Tibial artery (tissue), 4 donors: ENCODE measurements at regions of chr6 and their contacts with region 1.

Region 1: DNA sequence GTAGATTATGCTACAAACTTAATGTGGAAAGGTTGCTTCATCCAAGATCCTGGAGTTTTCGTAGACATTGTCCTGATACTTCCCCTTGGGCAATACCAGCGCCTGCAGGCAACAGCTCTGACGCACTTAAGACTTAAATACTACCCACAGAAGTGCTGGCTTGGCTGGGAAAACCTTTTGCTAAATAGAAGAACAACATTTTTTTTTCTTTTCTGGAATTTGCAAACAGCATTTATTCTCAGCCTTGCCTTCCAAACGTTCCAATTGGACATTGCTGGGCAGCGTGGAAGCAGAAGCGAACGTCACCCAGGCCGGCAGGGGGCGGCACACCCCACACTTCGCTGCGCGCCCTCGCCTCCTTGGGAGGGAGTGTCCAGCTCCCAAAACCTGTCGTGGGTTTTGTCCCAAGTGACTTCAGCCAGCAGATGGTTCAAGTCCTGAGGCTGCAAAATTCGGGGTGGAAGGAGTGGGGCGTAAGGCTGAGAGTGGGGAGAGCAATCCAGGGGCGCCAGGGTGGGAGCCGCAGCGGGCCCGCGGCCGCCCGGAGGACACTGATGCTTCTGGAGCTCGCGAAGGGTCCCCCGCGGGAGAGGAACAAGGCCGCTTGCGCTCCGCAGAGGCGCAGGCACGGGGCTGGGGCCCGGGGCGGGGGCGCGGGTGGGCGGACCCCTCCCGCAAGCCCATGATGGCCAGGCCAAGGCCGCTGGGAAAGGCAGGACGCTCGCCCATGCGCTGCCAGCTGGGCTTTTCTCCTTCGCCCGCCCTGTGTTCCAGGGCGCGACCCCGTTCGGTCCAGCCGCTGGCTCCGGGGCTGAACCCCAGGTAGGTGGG is 60.8 kb upstream of the MAP3K4 start:
- DNase-seq: peak; percentile 60 to 87
- H3K4me3 ChIP-seq: peak overlapping the region; percentile 51 to 58
- H3K27ac ChIP-seq: peak overlapping the region; percentile 34 to 62
- H3K4me1 ChIP-seq: peaks cover 0 to 17% (median 10%) of the 10 kb centered on the region in 4 donors
- H3K27me3 ChIP-seq: peaks cover 0 to 2% of the 10 kb centered on the region in 2 donors
- CTCF ChIP-seq: peak; percentile 92

Region 2: GRCh38 chr6:160991406-160992060 is 60.8 kb after region 1 on chr6 and contains the start of gene MAP3K4:
- intact Hi-C with region 1: loop called (anchors 2 kb)
- DNase-seq: peak; percentile 59 to 88
- H3K4me3 ChIP-seq: peak within 1 kb of the TSS; percentile 99 to 100
- H3K27ac ChIP-seq: peak within 1 kb of the TSS; percentile 91 to 94
- H3K4me1 ChIP-seq: peaks cover 0 to 26% (median 11%) of the 10 kb centered on the region in 4 donors
- H3K27me3 ChIP-seq: no peaks in the 10 kb centered on the region
- CTCF ChIP-seq: no peak